Astrocyte of the cerebellum (primary cell): ENCODE measurements at regions of chr2 and their contacts with region 1.

Region 1: GRCh38 chr2:60259781-60260180 is 293.7 kb downstream of the BCL11A start:
- DNase-seq: no peak
- H3K4me3 ChIP-seq: no peak overlapping the region
- CTCF ChIP-seq: no peak

Region 2: GRCh38 chr2:59025157-59025757 is 1234.5 kb before region 1 on chr2:
- in situ Hi-C with region 1: no loop called
- DNase-seq: no peak
- H3K4me3 ChIP-seq: no peak overlapping the region
- CTCF ChIP-seq: peak; percentile 79

Region 3: DNA sequence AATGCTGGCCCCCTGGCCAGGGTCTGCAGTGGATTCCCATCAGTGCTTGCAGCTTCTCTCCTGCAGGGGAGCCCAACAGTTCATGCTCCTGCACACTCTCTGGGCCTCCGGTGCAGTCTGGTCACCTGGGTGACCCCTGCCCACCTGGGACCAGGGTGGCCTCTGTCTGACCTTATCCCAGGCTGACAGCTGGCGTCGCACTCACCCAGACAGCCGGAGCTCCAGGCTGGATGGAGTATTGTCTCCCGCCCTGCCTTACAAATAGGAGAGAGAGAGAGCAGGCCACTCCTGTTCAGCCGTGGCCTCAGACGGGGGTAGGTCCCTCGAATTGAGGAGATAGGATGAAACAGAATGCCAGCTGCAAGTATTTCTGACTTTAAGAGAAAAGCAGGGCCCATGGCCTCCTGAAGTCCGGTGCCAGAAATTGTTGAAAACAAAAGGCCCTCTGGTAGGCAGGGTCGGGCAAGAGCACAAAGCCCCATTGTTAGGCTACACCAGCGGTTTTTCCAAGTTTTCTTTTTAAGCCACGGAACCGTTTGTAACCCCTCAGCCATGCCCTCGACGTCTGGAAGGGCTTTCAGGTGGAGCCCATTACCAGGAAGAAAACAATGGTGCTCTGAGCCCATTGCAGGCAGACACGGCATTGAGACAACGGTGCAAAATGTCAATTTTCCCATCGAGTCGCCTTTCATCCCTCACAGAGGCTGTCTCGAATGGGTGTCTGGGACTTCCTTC is 35.3 kb after region 1 on chr2:
- in situ Hi-C with region 1: loop called (anchors 5 kb)
- DNase-seq: no peak
- H3K4me3 ChIP-seq: no peak overlapping the region
- CTCF ChIP-seq: no peak

Region 4: DNA sequence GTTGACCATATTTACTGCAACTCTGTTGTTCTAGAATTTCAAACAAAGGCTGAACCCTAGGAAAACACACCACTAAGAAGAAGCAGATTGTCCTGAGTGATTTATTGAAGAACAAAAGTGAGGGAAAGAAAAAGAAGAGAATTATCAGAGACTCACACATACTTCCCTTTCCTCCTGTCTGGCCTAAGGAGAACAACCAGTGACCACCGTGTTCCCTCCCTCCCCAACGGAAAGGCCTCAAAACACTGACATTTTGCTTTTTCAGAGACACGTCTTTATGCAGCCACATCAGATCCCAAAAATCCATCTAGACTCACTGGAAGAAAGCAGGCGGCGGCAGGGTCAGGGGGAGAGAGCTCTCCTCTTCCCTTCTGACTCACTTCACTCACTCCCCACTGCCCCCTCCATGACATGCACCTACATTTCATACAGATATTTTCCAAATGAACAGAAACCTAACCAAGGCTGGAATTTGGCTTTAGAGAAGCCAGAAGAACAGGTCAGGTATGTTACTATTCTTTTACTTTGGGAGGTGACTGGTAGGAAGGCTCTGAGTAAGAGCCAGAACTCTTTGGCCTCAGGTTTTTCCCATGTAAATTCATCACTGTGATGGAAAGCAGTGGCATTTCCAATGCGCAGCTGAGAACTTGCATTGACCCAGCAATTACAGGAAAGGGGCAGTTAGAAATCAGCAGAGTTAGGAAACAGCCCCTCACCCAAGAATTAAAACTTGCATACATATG is 123.8 kb after region 1 on chr2:
- in situ Hi-C with region 1: no loop called
- DNase-seq: no peak
- H3K4me3 ChIP-seq: no peak overlapping the region
- CTCF ChIP-seq: no peak